Sigmoid colon (tissue), 7 donors: ENCODE measurements at regions of chr4 and their contacts with region 1.

Region 1: DNA sequence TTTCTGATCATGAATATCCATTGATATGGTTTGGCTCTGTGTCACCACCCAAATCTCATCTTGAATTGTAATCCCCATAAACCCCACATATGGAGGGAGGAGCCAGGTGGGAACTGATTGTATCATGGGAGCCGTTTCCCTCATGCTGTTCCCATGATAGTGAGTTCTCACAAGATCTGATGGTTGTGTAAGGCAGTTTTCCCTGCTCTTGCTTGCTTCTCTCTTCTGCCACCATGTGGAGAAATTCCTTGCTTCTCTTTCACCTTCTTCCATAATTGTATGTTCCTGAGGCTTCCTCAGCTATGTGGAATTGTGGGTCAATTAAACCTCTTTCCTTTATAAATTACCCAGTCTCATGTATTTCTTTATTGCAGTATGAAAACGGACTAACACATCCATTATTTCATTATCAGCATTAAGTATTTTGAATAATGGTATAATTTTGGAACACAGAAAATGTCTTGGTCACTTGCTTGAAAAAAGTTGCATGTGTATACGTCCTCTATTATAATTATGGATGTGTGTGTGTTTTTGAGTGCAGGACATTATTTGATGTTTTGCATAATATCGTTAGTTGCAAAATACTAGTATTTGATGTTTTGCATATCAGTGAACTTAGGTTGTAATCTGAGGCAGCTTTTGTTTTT is 334.6 kb downstream of the PCDH10 start:
- DNase-seq: no peak
- H3K4me3 ChIP-seq: no peak overlapping the region
- H3K27ac ChIP-seq: no peak overlapping the region
- H3K4me1 ChIP-seq: no peaks in the 10 kb centered on the region
- H3K27me3 ChIP-seq: no peaks in the 10 kb centered on the region
- CTCF ChIP-seq: no peak
- EP300 ChIP-seq: no peak
- POLR2A ChIP-seq: no peak

Region 2: GRCh38 chr4:133148690-133149363 is 334.9 kb before region 1 on chr4 and contains the start of gene PCDH10:
- intact Hi-C with region 1: loop called (anchors 10 kb)
- DNase-seq: peak; percentile 94
- H3K4me3 ChIP-seq: peak within 1 kb of the TSS; percentile 32 to 55 (median 44)
- H3K27ac ChIP-seq: no peak within 1 kb of the TSS
- H3K4me1 ChIP-seq: peaks cover 0 to 73% (median 60%) of the 10 kb centered on the region in 4 donors
- H3K27me3 ChIP-seq: peaks cover 16 to 43% (median 21%) of the 10 kb centered on the region in 3 donors
- CTCF ChIP-seq: no peak
- EP300 ChIP-seq: no peak
- POLR2A ChIP-seq: no peak
- total RNA-seq, gene PCDH10: 0.49 to 1.9 (median 1.4) TPM

Region 3: DNA sequence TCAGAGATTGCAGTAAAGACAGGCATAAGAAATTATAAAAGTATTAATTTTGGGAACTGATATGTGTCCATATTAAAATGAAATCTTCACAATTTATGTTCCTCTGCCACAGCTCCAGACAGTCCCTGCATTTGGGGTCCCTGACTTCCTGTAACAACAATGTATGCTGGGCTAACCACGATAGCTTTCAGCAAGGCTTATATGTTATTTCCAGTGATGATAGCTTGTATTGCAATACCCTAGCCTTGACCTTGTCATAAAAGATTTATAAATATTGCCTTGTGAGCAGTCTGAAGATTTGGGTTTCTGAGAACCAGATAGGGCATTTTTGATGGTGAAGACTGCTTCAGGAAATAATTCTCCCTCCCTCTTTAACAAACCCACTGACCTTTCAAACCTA is 205.1 kb before region 1 on chr4:
- intact Hi-C with region 1: no loop called
- DNase-seq: no peak
- H3K4me3 ChIP-seq: no peak overlapping the region
- H3K27ac ChIP-seq: no peak overlapping the region
- H3K4me1 ChIP-seq: no peaks in the 10 kb centered on the region
- H3K27me3 ChIP-seq: no peaks in the 10 kb centered on the region
- CTCF ChIP-seq: no peak
- EP300 ChIP-seq: no peak
- POLR2A ChIP-seq: no peak